ENCODE measurements at regions of chr4 and their contacts with region 1.

Region 1: GRCh38 chr4:56641494-56642051 is 39.5 kb downstream of the HOPX start:
- DNase-seq: peak; percentile 98
- ATAC-seq: peak; percentile 80
- H3K4me3 ChIP-seq: peak overlapping the region; percentile 43; the same call in 1 of the 2 replicates
- H3K27ac ChIP-seq: peak overlapping the region; percentile 97
- H3K4me1 ChIP-seq: peaks cover 55% of the 10 kb centered on the region
- H3K27me3 ChIP-seq: no peaks in the 10 kb centered on the region
- CTCF ChIP-seq: 0 out of 2 replicates have a peak, but pooled peaks have one; percentile 20

Region 2: GRCh38 chr4:56611501-56611900 is 30.1 kb before region 1 on chr4:
- CTCF ChIA-PET with region 1: no interaction called
- POLR2A ChIA-PET with region 1: no interaction called
- intact Hi-C with region 1: no loop called
- DNase-seq: no peak
- ATAC-seq: no peak
- H3K4me3 ChIP-seq: no peak overlapping the region
- H3K27ac ChIP-seq: no peak overlapping the region
- H3K4me1 ChIP-seq: no peaks in the 10 kb centered on the region
- H3K27me3 ChIP-seq: no peaks in the 10 kb centered on the region
- CTCF ChIP-seq: no peak

Region 3: GRCh38 chr4:56622176-56622575 is 19.4 kb before region 1 on chr4:
- CTCF ChIA-PET with region 1: interaction called, 6 read pairs
- POLR2A ChIA-PET with region 1: no interaction called
- intact Hi-C with region 1: loop called (anchors 1 kb)
- DNase-seq: peak; percentile 88
- ATAC-seq: peak; percentile 76
- H3K4me3 ChIP-seq: no peak overlapping the region
- H3K27ac ChIP-seq: peak overlapping the region; percentile 66
- H3K4me1 ChIP-seq: peaks cover 26% of the 10 kb centered on the region
- H3K27me3 ChIP-seq: no peaks in the 10 kb centered on the region
- CTCF ChIP-seq: no peak

Region 4: GRCh38 chr4:56698329-56698728 is 56.8 kb after region 1 on chr4:
- CTCF ChIA-PET with region 1: no interaction called
- POLR2A ChIA-PET with region 1: interaction called, 10 read pairs
- intact Hi-C with region 1: no loop called
- DNase-seq: no peak
- ATAC-seq: no peak
- H3K4me3 ChIP-seq: no peak overlapping the region
- H3K27ac ChIP-seq: no peak overlapping the region
- H3K4me1 ChIP-seq: peaks cover 5% of the 10 kb centered on the region
- H3K27me3 ChIP-seq: no peaks in the 10 kb centered on the region
- CTCF ChIP-seq: no peak

Region 5: DNA sequence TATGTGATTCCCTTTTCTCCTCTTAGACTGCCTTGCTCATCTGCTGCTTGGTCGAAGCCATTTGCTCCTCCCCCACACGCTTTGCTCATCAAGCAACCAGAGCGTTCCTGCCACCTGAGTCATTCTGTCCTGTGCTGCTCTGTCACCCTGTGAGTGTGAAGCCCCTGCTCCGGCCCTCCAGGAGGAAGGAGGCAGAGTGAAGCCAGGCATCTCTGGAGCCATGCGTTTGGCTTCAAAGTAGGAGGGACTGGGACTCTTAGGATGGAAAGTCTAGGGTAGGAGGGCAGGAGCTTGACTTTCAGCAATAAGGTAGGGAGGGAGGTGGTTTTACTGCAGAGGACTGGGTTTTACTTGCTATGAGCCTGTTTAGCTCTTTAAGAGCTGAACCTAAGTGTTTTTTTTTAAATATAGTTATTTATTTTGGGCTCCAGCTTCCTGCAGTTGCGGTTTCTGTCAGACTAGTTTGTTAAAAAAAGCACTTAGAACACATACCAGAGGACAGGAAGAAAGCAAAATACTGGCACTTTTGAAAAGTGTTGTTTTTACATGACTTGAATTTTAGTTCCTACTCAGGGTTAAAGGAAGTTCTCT is 116.3 kb after region 1 on chr4:
- CTCF ChIA-PET with region 1: no interaction called
- POLR2A ChIA-PET with region 1: no interaction called
- intact Hi-C with region 1: loop called (anchors 5 kb)
- DNase-seq: peak; percentile 98
- ATAC-seq: peak; percentile 89
- H3K4me3 ChIP-seq: peak overlapping the region; percentile 43
- H3K27ac ChIP-seq: peak overlapping the region; percentile 74
- H3K4me1 ChIP-seq: peaks cover 39% of the 10 kb centered on the region
- H3K27me3 ChIP-seq: no peaks in the 10 kb centered on the region
- CTCF ChIP-seq: no peak